ENCODE measurements at regions of chr2 and their contacts with region 1.

Region 1: DNA sequence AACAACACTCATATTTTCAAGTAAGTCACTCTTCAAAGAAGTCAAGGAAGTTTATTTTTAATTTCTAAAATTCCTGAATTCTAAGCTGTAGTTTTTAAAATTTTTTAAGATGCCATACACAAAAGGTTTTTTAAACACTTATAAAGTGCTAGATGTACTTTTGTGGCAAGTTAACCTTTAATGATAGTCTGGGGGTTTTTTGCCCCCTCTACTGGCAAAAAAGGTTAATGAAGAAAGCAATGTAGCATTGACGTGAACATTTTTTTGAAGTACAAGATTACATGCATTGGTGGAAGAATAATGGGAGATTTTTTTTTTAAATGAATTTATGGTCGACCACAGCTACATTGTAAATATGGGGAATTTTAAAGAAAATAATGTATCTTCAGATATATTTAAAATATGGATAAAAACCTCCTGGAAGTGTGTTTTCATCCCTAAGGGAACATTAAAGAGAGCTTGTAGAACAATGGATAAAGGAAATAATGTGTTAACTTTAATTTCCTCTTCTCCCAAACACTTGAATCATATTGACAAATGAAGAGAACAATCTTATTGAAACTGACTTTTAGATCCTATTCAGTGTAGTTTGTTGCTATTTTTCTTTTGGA is 12.6 kb downstream of the ITPRID2 start:
- DNase-seq: peak; percentile 67 to 81 (median 72)
- H3K4me3 ChIP-seq: no peak overlapping the region
- H3K27ac ChIP-seq: peak overlapping the region in 1 of 2 experiments; percentile 27
- H3K4me1 ChIP-seq: peaks cover 0 to 11% (median 5%) of the 10 kb centered on the region in 4 experiments
- H3K27me3 ChIP-seq: no peaks in the 10 kb centered on the region

Region 2: DNA sequence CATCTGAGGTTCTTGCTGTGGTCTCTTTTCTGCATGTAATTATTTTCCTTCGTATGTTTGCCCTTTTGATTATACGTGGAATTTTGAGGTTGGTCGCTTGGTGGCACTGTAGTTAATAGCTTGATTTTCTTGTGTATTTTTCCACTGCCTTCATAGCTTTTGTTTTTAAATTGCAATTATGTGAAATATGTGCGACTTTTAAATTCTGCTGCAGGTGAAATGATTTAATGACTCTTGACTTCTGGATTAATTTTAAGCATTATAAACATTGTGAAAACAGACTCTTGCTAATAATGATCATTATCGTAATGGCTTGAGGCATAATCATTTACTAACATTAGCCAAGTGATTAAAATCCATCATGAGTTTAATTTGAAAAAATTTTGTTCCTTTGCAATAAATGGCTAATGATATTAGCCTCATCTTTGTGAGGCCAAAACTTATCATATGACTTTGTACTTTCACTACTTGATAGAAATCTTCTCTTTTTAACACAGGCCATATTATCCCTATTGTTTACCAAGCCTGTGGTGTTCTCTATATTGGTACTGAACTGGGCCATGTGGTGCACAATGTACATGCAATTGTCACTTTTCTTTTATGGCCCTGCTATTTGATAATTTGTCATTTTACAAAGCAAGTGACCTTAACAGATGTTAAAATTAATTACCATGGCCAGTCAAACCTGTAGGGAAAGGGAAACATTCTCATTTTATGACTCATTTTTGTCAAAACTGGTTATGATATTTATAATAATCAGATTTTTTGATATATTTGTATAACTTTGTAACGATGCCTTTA is 161.0 kb before region 1 on chr2:
- CTCF ChIA-PET with region 1: interaction called, 85 read pairs
- POLR2A ChIA-PET with region 1: no interaction called
- DNase-seq: peak; percentile 65 to 85 (median 79)
- H3K4me3 ChIP-seq: no peak overlapping the region
- H3K27ac ChIP-seq: no peak overlapping the region
- H3K4me1 ChIP-seq: no peaks in the 10 kb centered on the region
- H3K27me3 ChIP-seq: no peaks in the 10 kb centered on the region

Region 3: DNA sequence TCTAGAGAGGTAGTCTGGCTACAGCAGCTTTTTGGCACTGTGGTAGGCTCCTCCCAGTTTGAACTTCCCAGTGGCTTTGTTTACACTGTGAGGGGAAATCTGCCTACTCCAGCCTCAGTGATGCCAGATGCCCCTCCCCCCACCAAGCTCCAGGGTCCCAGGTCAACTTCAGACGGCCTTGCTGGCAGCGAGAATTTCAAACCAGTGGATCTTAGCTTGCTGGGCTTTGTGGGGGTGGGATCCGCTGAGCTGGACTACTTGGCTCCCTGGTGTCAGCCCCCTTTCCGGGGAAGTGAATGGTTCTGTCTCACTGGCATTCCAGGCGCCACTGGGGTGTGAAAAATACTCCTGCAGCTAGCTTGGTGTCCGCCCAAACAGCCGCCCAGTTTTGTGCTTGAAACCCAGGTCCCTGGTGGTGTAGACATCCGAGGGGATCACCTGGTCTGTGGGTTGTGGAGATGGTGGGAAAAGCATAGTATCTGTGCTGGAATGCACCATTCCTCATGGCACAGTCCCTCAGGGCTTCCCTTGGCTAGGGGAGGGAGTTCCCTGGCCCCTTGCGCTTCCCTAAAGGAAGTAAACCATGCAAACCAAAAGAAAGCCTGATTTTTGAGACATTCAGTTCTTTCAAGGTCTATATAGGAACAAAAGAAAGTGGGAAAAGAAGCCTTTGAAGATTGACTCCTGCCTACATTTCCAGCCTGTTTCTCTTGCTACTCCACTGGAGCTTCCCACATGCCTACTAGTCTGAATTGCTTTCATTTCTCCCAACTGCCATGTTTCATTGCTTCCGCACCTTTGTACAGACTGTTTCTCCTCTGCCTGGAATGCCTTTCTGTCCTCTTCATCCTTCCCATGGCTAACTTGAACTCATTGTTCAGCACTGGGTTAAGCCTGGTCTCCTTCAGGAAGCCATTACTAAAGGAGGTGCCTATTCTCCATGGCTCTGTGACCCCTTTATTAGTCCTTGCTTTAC is 153.6 kb before region 1 on chr2:
- CTCF ChIA-PET with region 1: interaction called, 17 read pairs
- POLR2A ChIA-PET with region 1: no interaction called
- DNase-seq: no peak
- H3K4me3 ChIP-seq: no peak overlapping the region
- H3K27ac ChIP-seq: no peak overlapping the region
- H3K4me1 ChIP-seq: peaks cover 0 to 2% (median 0%) of the 10 kb centered on the region in 4 experiments
- H3K27me3 ChIP-seq: no peaks in the 10 kb centered on the region

Region 4: GRCh38 chr2:181764095-181764963 is 139.8 kb before region 1 on chr2:
- CTCF ChIA-PET with region 1: interaction called, 14 read pairs
- POLR2A ChIA-PET with region 1: no interaction called
- DNase-seq: peak; percentile 82 to 98 (median 93)
- H3K4me3 ChIP-seq: no peak overlapping the region
- H3K27ac ChIP-seq: peak overlapping the region in 1 of 2 experiments; percentile 21
- H3K4me1 ChIP-seq: peaks cover 3 to 18% (median 9%) of the 10 kb centered on the region in 4 experiments
- H3K27me3 ChIP-seq: no peaks in the 10 kb centered on the region

Region 5: DNA sequence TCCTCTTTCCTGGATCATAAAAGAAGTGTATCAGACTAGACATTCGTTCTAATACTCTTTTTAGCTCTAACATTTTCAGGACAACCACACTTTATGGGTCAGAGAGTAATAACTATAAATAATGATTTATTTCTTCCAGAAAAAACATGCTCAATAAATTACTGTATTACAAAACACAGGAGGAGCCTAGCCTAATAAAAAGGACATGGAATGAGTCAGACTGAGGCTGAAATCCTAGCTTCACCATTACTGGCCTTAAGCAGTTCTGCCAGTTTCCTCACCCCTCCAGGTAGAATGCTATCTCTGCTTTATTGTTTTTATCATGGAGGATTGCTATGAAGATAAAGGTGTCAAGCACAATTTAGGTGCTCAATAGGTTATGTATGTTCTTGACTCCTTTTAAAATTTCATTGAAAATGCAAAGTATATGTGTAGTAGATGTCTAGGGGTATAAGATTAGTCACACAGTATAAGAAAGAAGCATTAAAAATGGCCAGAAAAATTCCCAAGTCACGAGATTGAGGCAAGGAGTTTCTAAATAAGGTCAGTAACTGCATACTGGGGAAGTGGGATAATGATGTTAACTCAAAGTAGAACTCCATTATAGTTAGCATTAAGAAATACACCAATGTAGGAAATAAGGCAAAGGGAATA is 118.3 kb before region 1 on chr2:
- CTCF ChIA-PET with region 1: interaction called, 14 read pairs
- POLR2A ChIA-PET with region 1: interaction called, 3 read pairs
- DNase-seq: no peak
- H3K4me3 ChIP-seq: no peak overlapping the region
- H3K27ac ChIP-seq: no peak overlapping the region
- H3K4me1 ChIP-seq: peaks cover 3 to 34% (median 25%) of the 10 kb centered on the region in 4 experiments
- H3K27me3 ChIP-seq: no peaks in the 10 kb centered on the region

Region 6: DNA sequence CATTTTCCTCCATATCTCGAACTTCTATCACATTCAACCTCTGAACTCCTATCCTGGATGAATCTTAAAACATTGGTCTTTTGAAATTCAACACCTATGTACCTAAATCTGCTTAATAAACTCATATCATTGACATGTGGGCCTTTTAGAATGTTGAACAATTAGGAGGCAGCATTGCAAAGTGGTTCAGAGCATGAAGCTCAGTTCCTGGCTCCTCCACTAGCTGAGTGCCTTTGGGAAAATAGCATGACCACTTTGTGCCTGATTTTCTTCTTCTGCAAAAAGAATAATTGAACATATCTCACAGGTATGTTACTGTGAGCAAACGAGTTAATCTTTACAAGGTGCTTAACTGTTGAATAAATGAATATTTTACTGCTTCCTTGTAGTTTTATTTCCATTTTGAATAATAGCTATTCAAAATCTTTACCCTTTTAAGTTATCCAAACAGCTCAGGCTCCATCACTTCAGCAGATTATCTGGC is 26.9 kb before region 1 on chr2:
- CTCF ChIA-PET with region 1: no interaction called
- POLR2A ChIA-PET with region 1: no interaction called
- DNase-seq: no peak
- H3K4me3 ChIP-seq: no peak overlapping the region
- H3K27ac ChIP-seq: no peak overlapping the region
- H3K4me1 ChIP-seq: no peaks in the 10 kb centered on the region
- H3K27me3 ChIP-seq: no peaks in the 10 kb centered on the region

Region 7: DNA sequence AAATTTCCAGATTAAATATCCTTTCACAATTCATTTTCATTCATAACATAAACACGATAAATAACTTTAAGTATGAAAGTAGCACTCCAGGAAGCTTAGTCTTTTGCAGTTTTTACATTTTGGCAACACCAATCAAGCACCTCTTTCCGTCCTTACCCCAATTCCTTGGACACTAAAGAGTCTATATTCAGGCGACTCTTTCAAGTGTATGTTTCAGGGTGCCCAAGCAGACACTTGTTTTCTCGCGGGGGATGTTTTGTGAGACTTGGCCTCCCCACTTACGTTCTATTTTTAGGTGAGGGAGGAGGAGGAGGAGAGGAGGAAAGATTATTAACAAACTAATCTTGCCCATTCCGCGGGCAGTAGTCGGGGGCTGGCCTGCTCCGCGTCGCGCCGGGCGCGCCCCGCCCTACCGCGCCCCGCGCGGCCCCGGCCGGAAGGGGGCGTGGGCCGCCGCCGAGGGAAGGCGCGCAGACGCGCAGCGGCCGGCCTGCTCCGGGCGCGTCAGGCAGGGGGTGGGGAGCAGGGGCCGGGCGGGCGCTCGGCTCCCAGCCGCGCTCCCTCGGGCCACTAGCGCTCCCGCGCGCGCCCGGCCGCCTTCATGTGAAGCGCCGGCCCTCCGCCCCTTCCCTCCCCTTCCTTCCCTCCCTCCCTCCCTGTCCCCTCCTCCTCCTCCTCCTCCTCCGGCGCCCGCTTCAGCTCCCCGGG is 12.7 kb before region 1 on chr2 and contains the start of gene ITPRID2:
- CTCF ChIA-PET with region 1: interaction called, 27 read pairs
- POLR2A ChIA-PET with region 1: no interaction called
- DNase-seq: peak; percentile 84 to 91 (median 89)
- H3K4me3 ChIP-seq: peak within 1 kb of the TSS; percentile 64 to 92 (median 86)
- H3K27ac ChIP-seq: peak within 1 kb of the TSS; percentile 92
- H3K4me1 ChIP-seq: peaks cover 20 to 39% (median 27%) of the 10 kb centered on the region in 4 experiments
- H3K27me3 ChIP-seq: no peaks in the 10 kb centered on the region

Region 8: GRCh38 chr2:181923123-181923522 is 19.0 kb after region 1 on chr2:
- CTCF ChIA-PET with region 1: no interaction called
- POLR2A ChIA-PET with region 1: no interaction called
- DNase-seq: no peak
- H3K4me3 ChIP-seq: no peak overlapping the region
- H3K27ac ChIP-seq: no peak overlapping the region
- H3K4me1 ChIP-seq: no peaks in the 10 kb centered on the region
- H3K27me3 ChIP-seq: no peaks in the 10 kb centered on the region

Measured in common myeloid progenitor, CD34-positive (primary cell).